ENCODE measurements at regions of chr14 and their contacts with region 1.

Region 1: DNA sequence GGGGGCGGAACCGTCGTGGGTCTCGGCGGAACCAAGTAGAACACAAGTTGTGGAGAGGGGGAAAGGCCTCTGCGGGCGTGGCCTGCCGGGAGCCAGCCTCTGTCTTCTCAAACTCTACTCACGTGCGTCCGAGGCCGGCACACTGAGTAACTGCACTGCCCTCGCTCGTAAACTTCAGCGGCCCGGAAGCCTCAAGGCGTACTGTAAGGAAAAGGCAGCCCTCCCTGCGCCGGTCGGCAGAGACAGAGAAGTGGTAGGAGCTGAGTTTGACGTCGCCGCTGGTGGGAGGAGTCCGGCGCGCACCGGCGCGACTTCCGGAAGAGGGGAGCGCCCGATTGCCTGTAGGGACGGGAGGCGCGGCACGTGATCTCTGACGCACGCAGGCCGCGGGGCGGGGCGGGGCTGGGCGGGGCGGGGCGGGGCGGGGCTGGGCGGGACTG is at the start of gene FBXO33:
- H3K4me3 ChIP-seq: peak within 1 kb of the TSS; percentile 87
- H3K27ac ChIP-seq: peak within 1 kb of the TSS; percentile 100
- H3K4me1 ChIP-seq: peaks cover 4% of the 10 kb centered on the region; the same call in 1 of the 2 replicates
- CTCF ChIP-seq: no peak

Region 2: DNA sequence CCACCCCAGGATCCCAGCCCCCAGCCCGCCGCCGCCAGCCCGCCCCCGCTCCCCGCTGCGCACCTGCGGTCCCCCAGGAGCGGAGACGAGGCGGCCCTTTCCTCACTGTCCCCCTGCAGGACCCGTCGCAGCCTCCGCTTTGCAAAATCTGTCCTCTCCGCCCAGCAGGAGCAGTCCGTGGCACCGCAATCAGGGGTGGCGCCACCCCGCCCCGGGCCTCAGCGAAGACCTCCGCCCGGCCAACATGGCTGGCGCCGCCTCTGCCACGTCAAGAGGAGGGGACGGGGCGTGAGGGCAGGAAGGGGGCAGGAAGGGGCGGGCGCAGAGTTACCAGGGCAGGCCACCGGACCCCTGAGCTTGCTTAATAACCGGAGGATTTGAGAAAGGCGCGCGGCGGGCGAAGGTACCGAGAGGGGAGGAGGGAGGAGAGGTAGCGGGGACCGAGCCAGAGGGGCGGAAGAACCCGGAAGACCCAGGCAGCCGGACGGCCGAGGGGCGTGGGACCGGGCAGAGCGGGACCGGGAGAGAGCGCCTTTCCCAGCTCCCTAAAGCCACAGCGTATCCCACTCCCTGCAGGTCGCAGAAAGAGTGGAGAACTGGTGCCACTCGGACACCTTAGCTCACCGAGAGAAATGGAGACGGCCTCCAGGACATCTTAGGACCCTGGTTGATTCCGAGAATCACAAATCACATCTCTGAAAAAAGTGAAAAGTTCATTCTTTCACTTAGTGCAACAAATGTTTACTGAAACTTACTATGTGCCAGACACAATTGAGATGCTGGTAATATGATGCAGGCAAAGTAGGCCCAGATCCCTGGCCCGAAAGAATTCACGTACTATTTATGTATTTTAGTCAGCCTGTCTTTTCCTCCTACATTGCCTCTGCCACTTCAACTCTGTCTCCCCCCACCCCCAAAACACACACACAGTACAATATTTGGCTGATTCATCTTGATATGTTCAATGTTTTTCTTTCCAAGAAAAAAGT is 328.9 kb before region 1 on chr14 and contains the start of gene SEC23A:
- CTCF ChIA-PET with region 1: interaction called, 4 read pairs
- POLR2A ChIA-PET with region 1: interaction called, 24 read pairs
- H3K4me3 ChIP-seq: peak within 1 kb of the TSS; percentile 93
- H3K27ac ChIP-seq: peak within 1 kb of the TSS; percentile 77
- H3K4me1 ChIP-seq: no peaks in the 10 kb centered on the region
- CTCF ChIP-seq: peak; percentile 76

Region 3: GRCh38 chr14:39114073-39114838 is 317.9 kb before region 1 on chr14 and contains the start of gene GEMIN2:
- CTCF ChIA-PET with region 1: no interaction called
- POLR2A ChIA-PET with region 1: interaction called, 15 read pairs
- H3K4me3 ChIP-seq: peak within 1 kb of the TSS; percentile 87
- H3K27ac ChIP-seq: peak within 1 kb of the TSS; percentile 28
- H3K4me1 ChIP-seq: no peaks in the 10 kb centered on the region
- CTCF ChIP-seq: no peak

Region 4: GRCh38 chr14:39446131-39446744 is 14.0 kb after region 1 on chr14:
- CTCF ChIA-PET with region 1: interaction called, 3 read pairs
- POLR2A ChIA-PET with region 1: interaction called, 10 read pairs
- H3K4me3 ChIP-seq: no peak overlapping the region
- H3K27ac ChIP-seq: no peak overlapping the region
- H3K4me1 ChIP-seq: no peaks in the 10 kb centered on the region
- CTCF ChIP-seq: no peak

Region 5: DNA sequence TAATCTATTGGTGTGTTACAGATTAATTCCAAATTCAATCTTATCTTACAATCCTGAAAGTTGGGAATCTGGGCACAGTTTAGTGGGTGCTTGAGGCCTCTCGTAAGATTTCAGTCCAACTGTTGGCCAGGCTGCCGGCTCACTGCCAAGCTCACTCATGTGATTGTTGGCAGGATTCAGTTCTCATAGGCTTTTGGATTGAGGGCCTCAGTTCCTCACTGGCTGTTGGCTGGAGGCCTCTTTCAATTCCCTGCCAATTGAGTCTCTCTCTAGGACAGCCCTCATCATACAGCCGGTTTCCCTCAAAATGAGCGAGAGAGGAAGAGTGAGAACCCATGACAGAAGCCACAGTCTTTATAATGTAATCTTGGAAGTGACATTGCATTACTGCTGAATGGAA is 123.5 kb after region 1 on chr14:
- CTCF ChIA-PET with region 1: no interaction called
- POLR2A ChIA-PET with region 1: no interaction called
- H3K4me3 ChIP-seq: no peak overlapping the region
- H3K27ac ChIP-seq: no peak overlapping the region
- H3K4me1 ChIP-seq: no peaks in the 10 kb centered on the region
- CTCF ChIP-seq: no peak

Measured in HEK293 (cell line).